ENCODE measurements at regions of chr11 and their contacts with region 1.

Region 1: GRCh38 chr11:102476812-102477211 is 24.2 kb upstream of the TMEM123 start:
- DNase-seq: peak; percentile 71
- ATAC-seq: peak; percentile 75
- H3K4me3 Mint-ChIP-seq: peak overlapping the region; percentile 53
- H3K27ac Mint-ChIP-seq: peak overlapping the region; percentile 90
- H3K4me1 Mint-ChIP-seq: peaks cover 61% of the 10 kb centered on the region
- H3K27me3 Mint-ChIP-seq: no peaks in the 10 kb centered on the region
- CTCF ChIP-seq: no peak

Region 2: GRCh38 chr11:102459393-102459792 is 17.4 kb before region 1 on chr11:
- CTCF ChIA-PET with region 1: interaction called, 4 read pairs
- POLR2A ChIA-PET with region 1: interaction called, 10 read pairs
- intact Hi-C with region 1: no loop called
- DNase-seq: no peak
- ATAC-seq: peak; percentile 34
- H3K4me3 Mint-ChIP-seq: no peak overlapping the region
- H3K27ac Mint-ChIP-seq: peak overlapping the region; percentile 7
- H3K4me1 Mint-ChIP-seq: peaks cover 74% of the 10 kb centered on the region
- H3K27me3 Mint-ChIP-seq: no peaks in the 10 kb centered on the region
- CTCF ChIP-seq: no peak

Region 3: GRCh38 chr11:102488208-102488607 is 11.4 kb after region 1 on chr11:
- CTCF ChIA-PET with region 1: interaction called, 19 read pairs
- POLR2A ChIA-PET with region 1: interaction called, 19 read pairs
- intact Hi-C with region 1: no loop called
- DNase-seq: peak; percentile 26
- ATAC-seq: peak; percentile 69
- H3K4me3 Mint-ChIP-seq: no peak overlapping the region
- H3K27ac Mint-ChIP-seq: peak overlapping the region; percentile 59
- H3K4me1 Mint-ChIP-seq: peaks cover 40% of the 10 kb centered on the region
- H3K27me3 Mint-ChIP-seq: no peaks in the 10 kb centered on the region
- CTCF ChIP-seq: no peak

Measured in activated CD8-positive, alpha-beta T cell treated with anti-CD3 and anti-CD28 coated beads for 36 hours (primary cell).